ENCODE measurements at regions of chr1 and their contacts with region 1.

Region 1: DNA sequence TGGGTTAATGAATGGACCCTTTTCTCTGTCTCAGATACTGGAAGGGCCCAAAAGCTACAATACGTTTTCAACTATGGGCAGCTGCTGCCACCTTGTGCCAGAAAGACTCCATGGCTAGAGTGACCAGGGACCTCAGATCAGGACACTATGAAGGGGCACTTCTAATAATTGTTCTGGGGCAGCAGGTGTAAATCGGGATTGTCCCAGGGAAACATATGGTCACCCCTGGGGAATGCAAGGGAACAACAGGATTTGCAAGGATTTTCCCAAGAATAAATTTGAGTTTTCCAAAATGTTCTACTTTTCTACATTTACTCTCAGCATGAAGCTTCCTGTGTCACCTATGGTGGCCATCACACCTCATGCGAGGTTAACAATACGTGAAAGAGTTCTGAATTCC is 12.0 kb upstream of the FCAMR start:
- DNase-seq: peak; percentile 77
- CTCF ChIP-seq: peak; percentile 85

Region 2: DNA sequence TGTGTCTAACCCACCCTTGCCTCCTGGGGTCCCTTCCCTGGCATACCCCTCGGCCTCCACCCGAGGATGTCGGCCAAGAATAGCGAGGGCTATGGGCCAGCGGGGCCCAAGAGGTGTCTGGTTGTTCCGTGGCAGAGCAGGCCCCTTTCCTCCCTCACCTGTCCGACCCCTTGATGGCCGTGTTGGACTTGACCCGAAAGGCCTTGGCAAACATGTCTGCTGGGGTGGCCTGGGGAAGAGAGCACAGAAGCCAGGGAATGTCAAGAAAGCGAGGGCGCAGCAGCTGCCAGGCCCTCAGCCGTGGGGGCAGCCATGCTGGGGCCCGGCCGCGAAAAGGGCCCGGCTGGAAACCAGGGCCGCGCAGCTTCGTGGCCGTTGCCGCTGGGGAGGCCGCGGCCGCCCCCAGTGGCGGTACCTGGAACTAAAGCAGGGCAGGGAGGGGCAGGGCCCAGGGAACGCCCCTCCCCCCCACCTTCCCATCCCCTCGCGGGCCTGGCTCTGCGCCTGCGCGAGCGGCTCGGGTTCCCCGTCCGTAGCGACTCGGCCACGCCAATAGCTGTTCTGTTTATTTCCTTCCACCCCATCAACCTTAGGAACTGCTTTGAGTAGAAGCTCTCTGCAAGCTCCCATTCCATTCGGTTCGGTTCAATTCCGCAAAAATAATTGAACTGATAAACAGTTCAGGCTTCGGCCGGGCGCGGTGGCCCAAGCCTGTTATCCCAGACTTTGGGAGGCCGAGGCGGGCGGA is 369.9 kb before region 1 on chr1 and contains the start of gene EIF2D:
- CTCF ChIA-PET with region 1: interaction called, 10 read pairs
- POLR2A ChIA-PET with region 1: no interaction called
- DNase-seq: peak; percentile 100
- CTCF ChIP-seq: peak; percentile 95

Region 3: GRCh38 chr1:206706298-206706791 is 275.9 kb before region 1 on chr1:
- CTCF ChIA-PET with region 1: interaction called, 10 read pairs
- POLR2A ChIA-PET with region 1: no interaction called
- DNase-seq: no peak
- CTCF ChIP-seq: no peak

Region 4: GRCh38 chr1:206865013-206865671 is 117.1 kb before region 1 on chr1 and contains the start of gene IL20:
- CTCF ChIA-PET with region 1: interaction called, 65 read pairs
- POLR2A ChIA-PET with region 1: no interaction called
- DNase-seq: peak; percentile 69
- CTCF ChIP-seq: peak; percentile 91

Region 5: GRCh38 chr1:206955476-206956451 is 26.5 kb before region 1 on chr1:
- CTCF ChIA-PET with region 1: interaction called, 52 read pairs
- POLR2A ChIA-PET with region 1: no interaction called
- DNase-seq: peak; percentile 59
- CTCF ChIP-seq: no peak

Region 6: GRCh38 chr1:206992790-206993189 is 10.6 kb after region 1 on chr1:
- CTCF ChIA-PET with region 1: interaction called, 29 read pairs
- POLR2A ChIA-PET with region 1: no interaction called
- DNase-seq: no peak
- CTCF ChIP-seq: no peak

Measured in GM10248 (cell line).